ENCODE measurements at regions of chr7 and their contacts with region 1.

Region 1: DNA sequence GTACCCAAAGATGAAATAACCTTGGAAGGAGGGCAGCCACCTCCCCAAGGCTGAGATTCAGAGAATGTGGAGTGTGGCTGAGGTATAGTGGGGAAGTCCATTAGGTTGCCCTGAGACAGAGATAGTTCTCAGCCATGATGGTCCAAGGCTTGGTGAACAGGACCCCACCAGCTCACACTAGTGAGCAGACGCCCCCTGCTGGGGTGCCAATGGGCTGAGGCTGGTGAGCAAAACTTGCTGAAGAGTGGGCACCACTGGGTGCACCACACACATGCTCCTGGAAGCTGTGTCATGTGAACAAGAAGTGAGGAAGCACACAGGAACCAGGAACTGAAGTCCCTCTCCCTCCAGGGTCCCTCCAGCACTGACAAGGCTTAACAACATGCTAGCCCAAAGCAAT is 8.9 kb downstream of the FBXL13 start:
- DNase-seq: peak; percentile 67
- H3K4me3 Mint-ChIP-seq: no peak overlapping the region
- H3K27ac Mint-ChIP-seq: no peak overlapping the region
- H3K4me1 Mint-ChIP-seq: peaks cover 8% of the 10 kb centered on the region
- H3K27me3 Mint-ChIP-seq: no peaks in the 10 kb centered on the region
- CTCF ChIP-seq: peak; percentile 28

Region 2: DNA sequence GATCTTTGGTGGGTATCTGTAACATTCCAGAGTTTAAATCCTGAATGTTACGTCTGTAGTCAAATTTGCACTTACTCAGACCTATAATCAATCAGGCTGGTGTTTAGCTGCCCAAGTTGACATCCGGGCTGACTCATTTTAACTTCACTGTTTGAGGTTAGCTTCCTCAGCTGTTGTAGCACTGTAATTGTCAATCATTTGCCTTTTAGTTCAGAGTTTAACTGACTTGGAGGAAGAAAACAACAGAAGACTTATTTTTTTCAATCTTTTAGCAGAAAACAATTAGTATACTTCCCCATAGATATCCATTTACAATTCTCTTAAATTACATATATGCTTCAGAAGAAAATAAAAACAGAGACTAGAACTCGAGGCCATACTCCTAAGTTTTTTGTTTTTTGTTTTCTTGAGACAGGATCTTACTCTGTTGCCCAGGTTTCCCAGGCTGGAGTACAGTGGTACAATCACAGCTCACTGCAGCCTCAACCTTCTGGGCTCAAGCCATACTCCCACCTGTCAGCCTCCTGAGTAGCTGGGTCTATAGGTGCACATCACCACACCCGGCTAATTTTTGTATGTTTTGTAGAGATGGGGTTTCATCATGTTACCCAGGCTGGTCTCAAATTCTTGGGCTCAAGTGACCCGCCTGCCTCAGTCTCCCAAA is 191.4 kb before region 1 on chr7:
- CTCF ChIA-PET with region 1: interaction called, 19 read pairs
- intact Hi-C with region 1: loop called (anchors 5 kb)
- DNase-seq: peak; percentile 50
- H3K4me3 Mint-ChIP-seq: no peak overlapping the region
- H3K27ac Mint-ChIP-seq: peak overlapping the region; percentile 98
- H3K4me1 Mint-ChIP-seq: peaks cover 64% of the 10 kb centered on the region
- H3K27me3 Mint-ChIP-seq: no peaks in the 10 kb centered on the region
- CTCF ChIP-seq: no peak

Region 3: GRCh38 chr7:102912742-102913141 is 152.9 kb before region 1 on chr7 and contains the start of gene LRRC17:
- CTCF ChIA-PET with region 1: interaction called, 18 read pairs
- intact Hi-C with region 1: no loop called
- DNase-seq: no peak
- H3K4me3 Mint-ChIP-seq: no peak within 1 kb of the TSS
- H3K27ac Mint-ChIP-seq: no peak within 1 kb of the TSS
- H3K4me1 Mint-ChIP-seq: peaks cover 9% of the 10 kb centered on the region
- H3K27me3 Mint-ChIP-seq: no peaks in the 10 kb centered on the region
- CTCF ChIP-seq: no peak
- total RNA-seq, gene LRRC17: 0.32 and 0.42 TPM in 2 replicates

Region 4: GRCh38 chr7:103009466-103010185 is 56.0 kb before region 1 on chr7:
- CTCF ChIA-PET with region 1: no interaction called
- intact Hi-C with region 1: no loop called
- DNase-seq: no peak
- H3K4me3 Mint-ChIP-seq: no peak overlapping the region
- H3K27ac Mint-ChIP-seq: no peak overlapping the region
- H3K4me1 Mint-ChIP-seq: no peaks in the 10 kb centered on the region
- H3K27me3 Mint-ChIP-seq: no peaks in the 10 kb centered on the region
- CTCF ChIP-seq: no peak

Region 5: DNA sequence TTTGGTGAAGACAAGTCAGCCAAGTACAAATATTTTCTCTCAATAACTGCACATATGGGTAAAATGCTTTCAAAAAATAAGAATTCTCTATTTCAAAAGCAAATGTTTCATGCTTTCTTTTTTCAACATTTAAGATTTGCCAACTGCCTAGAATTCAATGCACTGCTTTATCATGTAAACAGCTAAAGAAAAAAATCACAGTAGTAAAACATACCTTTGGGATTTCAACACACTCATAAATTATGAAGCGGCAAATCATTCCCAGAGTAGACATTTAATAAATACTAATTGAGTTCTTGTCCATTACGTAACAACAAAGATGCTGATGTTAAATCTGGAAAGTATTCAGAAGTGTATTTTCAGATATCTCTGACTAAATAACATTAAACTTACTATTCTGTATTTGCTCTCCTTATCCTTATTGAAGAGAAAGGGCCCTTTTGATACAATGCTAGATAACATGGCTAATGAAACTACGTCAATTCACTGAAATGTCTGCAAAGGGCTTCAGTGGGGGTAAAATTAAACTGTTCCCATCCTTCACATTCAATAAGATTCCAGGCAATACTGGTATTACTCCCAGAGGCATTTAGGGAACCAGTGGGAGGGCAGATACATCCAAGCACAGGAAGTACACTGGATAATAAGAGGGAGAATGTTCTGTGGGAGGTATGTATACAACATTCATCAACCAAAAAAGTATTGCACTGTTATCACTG is 69.3 kb after region 1 on chr7:
- CTCF ChIA-PET with region 1: no interaction called
- intact Hi-C with region 1: no loop called
- DNase-seq: no peak
- H3K4me3 Mint-ChIP-seq: no peak overlapping the region
- H3K27ac Mint-ChIP-seq: no peak overlapping the region
- H3K4me1 Mint-ChIP-seq: peaks cover 25% of the 10 kb centered on the region
- H3K27me3 Mint-ChIP-seq: no peaks in the 10 kb centered on the region
- CTCF ChIP-seq: no peak

Region 6: DNA sequence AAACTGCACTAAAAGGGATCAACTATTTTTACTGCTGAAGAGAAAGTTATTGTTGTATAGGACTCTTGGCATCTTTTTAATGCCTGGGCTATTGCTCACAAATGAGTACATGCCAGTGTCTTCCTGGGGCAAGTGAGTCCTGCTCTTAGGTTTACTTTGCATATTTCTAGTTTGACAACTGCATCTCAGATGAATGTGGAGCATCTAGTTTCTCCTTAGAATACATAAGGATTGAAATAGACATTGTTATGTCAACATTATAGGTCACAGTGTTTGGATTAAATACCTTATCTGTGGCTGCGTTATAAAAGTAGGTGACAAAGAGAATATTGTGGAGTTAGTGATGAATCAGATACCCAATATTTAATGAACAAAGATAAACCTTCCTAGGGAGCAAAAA is 326.4 kb after region 1 on chr7:
- CTCF ChIA-PET with region 1: no interaction called
- intact Hi-C with region 1: no loop called
- DNase-seq: no peak
- H3K4me3 Mint-ChIP-seq: no peak overlapping the region
- H3K27ac Mint-ChIP-seq: no peak overlapping the region
- H3K4me1 Mint-ChIP-seq: no peaks in the 10 kb centered on the region
- H3K27me3 Mint-ChIP-seq: no peaks in the 10 kb centered on the region
- CTCF ChIP-seq: no peak

Measured in Calu3 (cell line).